Endothelial cell of umbilical vein (primary cell): ENCODE measurements at regions of chr11 and their contacts with region 1.

Region 1: DNA sequence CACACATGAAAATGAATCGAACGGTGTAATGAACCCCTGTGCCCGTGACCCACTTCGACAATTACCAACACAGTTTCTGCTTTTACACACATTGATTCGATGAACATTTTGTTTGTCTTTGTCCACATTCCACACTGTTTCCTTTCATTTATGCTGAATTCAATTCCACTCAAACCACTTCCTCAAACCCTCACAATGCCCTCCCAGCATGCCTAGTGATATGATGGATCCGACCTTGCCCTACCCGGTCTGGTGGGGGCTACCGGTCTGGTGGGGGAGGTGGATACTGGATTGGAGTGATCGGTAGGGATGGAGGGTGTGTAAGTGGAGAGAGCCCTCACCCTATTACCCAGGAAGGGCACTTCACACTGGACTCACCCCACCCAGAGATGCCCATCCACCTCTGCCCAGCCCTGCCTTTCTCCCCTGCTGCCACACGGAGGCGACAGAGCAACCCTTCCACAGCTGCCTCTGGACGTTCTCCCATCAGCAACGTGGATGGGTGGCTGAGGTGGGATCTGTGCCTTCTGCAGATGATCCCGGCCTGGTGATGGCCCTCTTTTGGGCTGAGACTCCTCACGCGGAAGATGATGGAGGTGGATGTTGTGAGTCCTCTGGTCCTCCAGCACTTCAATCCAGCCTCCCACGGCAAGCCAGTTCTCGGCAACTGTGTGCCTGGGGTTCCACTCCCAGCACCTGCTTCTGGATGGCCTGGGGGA is 33.0 kb upstream of the P2RY2 start:
- DNase-seq: peak; percentile 75
- H3K4me3 ChIP-seq: peak overlapping the region in 1 of 3 experiments; percentile 24
- H3K27ac ChIP-seq: peak overlapping the region; percentile 53
- H3K4me1 ChIP-seq: peaks cover 23% of the 10 kb centered on the region
- H3K27me3 ChIP-seq: no peaks in the 10 kb centered on the region
- CTCF ChIP-seq: peak; percentile 93 to 97
- POLR2A ChIP-seq: no peak

Region 2: DNA sequence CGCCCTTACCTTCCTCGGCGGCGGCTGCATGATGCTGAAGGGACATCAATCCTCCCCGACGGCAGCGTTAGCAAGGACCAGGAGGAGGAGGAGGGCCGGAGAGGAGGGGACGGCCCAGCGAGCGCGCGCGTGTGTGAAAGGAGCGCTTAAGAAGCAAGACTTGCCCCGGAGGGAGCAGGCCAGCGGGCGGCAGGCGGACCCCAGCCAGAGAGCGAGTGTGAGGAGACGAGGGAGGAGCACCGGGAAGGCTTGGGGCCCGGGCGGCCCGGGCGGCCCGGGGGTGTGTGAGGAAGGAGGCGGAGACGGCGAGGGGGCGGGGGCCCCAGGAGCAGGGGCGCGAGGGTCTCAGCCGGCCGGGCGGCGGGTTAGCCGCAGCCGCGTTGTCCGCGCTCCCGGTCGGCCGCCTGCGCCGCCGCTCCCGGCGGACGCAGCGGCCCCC is 43.2 kb before region 1 on chr11:
- CTCF ChIA-PET with region 1: interaction called, 10 read pairs
- POLR2A ChIA-PET with region 1: interaction called, 4 read pairs
- dilution Hi-C with region 1: no loop called
- intact Hi-C with region 1: no loop called
- DNase-seq: peak; percentile 79
- H3K4me3 ChIP-seq: peak overlapping the region; percentile 56 to 95 (median 90)
- H3K27ac ChIP-seq: peak overlapping the region; percentile 88
- H3K4me1 ChIP-seq: peaks cover 37% of the 10 kb centered on the region
- H3K27me3 ChIP-seq: no peaks in the 10 kb centered on the region
- CTCF ChIP-seq: no peak
- POLR2A ChIP-seq: no peak

Region 3: DNA sequence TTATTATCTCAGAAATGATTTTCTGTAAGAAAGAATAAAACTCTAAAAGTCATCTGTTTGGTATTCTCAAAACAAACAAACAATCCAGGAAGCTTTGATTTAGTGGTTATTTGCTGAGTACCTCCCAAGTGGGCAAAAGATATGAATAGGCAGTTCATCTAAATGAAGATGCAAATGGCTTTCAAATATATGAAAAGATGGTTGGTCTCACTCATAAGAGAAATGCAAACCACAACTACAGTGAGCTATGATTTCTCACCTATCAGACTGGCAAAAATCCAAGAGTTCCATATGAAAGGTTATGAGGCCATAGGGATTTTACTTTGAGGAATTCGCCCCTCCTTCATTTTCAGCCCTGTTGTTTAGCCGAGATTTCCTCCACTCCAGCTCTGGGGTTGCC is 21.7 kb after region 1 on chr11:
- CTCF ChIA-PET with region 1: interaction called, 10 read pairs
- POLR2A ChIA-PET with region 1: no interaction called
- dilution Hi-C with region 1: no loop called
- intact Hi-C with region 1: no loop called
- DNase-seq: no peak
- H3K4me3 ChIP-seq: no peak overlapping the region
- H3K27ac ChIP-seq: no peak overlapping the region
- H3K4me1 ChIP-seq: no peaks in the 10 kb centered on the region
- H3K27me3 ChIP-seq: no peaks in the 10 kb centered on the region
- CTCF ChIP-seq: no peak
- POLR2A ChIP-seq: no peak

Region 4: DNA sequence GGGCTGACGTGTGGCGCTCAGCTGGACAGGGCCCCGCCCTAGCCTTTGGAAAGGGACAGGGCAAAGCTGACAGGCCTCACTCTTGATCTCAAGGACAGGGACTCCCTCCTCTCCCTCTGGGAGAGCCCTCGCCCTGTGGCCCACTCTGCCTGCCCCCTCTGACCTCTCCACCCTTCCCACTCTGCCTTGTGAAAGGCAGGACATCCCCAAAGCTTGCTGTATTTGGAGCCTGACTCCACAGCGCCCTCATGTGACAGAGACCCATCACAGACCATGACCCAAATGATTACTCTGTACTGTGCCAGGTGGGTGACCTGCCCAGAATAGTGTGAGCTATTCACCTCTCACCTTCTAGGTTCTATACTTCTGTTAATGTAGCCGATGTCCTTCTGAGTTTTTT is 51.7 kb after region 1 on chr11:
- CTCF ChIA-PET with region 1: interaction called, 107 read pairs
- POLR2A ChIA-PET with region 1: no interaction called
- dilution Hi-C with region 1: no loop called
- intact Hi-C with region 1: loop called (anchors 1 kb)
- DNase-seq: peak; percentile 61
- H3K4me3 ChIP-seq: no peak overlapping the region
- H3K27ac ChIP-seq: no peak overlapping the region
- H3K4me1 ChIP-seq: peaks cover 7% of the 10 kb centered on the region
- H3K27me3 ChIP-seq: no peaks in the 10 kb centered on the region
- CTCF ChIP-seq: peak; percentile 65 to 81
- POLR2A ChIP-seq: no peak

Region 5: GRCh38 chr11:73288873-73289707 is 104.0 kb after region 1 on chr11:
- CTCF ChIA-PET with region 1: interaction called, 110 read pairs
- POLR2A ChIA-PET with region 1: interaction called, 4 read pairs
- dilution Hi-C with region 1: no loop called
- intact Hi-C with region 1: loop called (anchors 1 kb)
- DNase-seq: peak; percentile 86
- H3K4me3 ChIP-seq: no peak overlapping the region
- H3K27ac ChIP-seq: peak overlapping the region; percentile 71
- H3K4me1 ChIP-seq: peaks cover 17% of the 10 kb centered on the region
- H3K27me3 ChIP-seq: no peaks in the 10 kb centered on the region
- CTCF ChIP-seq: peak; percentile 95
- POLR2A ChIP-seq: no peak

Region 6: DNA sequence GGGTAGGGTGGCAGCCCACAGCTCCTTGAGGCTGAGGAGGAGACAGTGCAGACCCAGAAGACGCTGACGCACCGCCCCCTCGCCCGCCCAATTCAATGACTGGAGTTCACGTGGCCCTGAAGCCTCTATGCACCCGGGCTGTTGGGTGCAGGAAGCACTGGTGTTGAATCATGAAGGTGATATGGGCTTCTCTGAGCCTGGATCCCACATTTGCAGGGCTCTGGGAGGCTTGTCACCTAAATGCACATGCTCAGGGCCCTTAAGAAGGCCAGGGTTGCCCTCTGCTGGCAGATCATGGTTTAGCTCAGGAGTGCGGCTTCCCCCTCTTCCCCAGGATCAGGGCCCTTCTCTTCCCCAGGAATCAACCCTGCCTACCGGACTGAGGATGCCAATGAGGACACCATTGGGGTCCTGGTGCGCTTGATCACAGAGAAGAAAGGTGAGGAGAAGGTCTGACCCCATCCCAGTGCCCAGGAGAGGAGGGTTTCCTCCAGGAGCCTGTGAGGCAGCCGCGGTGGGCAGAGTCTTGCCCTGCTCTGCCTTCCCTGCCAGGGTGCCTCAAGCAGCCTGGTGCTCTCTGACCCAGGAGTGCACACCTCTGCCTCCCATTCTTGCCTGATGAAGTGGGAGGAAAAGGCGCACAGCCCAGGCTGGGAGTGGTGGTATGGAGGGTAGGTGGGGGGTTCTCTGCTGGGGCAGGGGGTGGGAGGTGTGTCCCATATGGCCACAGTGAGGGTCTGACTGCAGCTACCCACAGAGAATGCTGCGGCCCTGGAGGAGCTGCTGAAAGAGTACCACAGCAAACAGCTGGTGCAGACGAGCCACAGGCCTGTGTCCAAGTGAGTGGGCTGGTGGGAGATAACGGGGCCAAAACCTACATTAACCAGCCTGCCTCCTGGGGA is 208.6 kb after region 1 on chr11:
- CTCF ChIA-PET with region 1: interaction called, 3 read pairs
- POLR2A ChIA-PET with region 1: no interaction called
- dilution Hi-C with region 1: no loop called
- intact Hi-C with region 1: loop called (anchors 1 kb)
- DNase-seq: peak; percentile 73
- H3K4me3 ChIP-seq: no peak overlapping the region
- H3K27ac ChIP-seq: peak overlapping the region; percentile 46
- H3K4me1 ChIP-seq: peaks cover 12% of the 10 kb centered on the region
- H3K27me3 ChIP-seq: no peaks in the 10 kb centered on the region
- CTCF ChIP-seq: peak; percentile 78 to 89
- POLR2A ChIP-seq: no peak